ENCODE measurements at regions of chr15 and their contacts with region 1.

Region 1: GRCh38 chr15:70097337-70098169 is at the start of gene TLE3:
- DNase-seq: peak; percentile 100
- H3K4me3 ChIP-seq: peak within 1 kb of the TSS; percentile 79 to 85 (median 83)
- H3K27ac ChIP-seq: peak within 1 kb of the TSS; percentile 71 to 98 (median 94)
- H3K4me1 ChIP-seq: peaks cover 57% of the 10 kb centered on the region in 2 donors
- H3K27me3 ChIP-seq: no peaks in the 10 kb centered on the region
- CTCF ChIP-seq: peak in 3 of 6 experiments; percentile 31 to 39 (median 33)
- POLR2A ChIP-seq: peak; percentile 85 to 98
- total RNA-seq, gene TLE3: 39.1 to 275 (median 71.6) TPM

Region 2: DNA sequence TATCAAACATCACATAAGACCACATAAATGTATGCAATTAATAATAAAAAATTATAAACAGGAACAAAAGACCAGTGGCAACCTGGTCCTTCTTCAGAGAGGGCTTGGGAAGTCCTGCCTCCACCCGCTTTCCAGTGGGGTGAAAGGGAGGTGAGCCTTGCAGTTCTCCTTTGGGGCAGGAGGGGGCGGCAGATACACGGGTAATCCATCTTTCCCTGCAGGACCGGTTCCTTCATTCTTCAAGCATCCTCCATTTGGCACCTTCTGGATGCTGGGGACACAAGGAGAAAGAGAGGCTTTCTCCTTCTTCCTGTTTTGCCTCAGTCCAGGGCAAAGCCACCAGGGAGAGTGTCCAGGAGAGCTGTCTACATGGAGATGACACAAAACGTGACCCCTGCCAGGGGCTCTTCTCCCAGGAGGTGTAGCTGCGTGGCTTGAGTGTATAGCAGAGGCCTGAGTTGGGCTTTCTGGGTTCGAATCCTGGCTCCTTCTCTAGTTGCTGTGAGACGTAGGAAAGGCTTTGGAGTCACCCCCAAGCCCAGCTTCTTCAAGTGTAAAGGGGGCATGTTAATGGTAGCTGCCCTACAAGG is 621.7 kb before region 1 on chr15:
- intact Hi-C with region 1: loop called (anchors 10 kb)
- DNase-seq: peak; percentile 75 to 77
- H3K4me3 ChIP-seq: no peak overlapping the region
- H3K27ac ChIP-seq: no peak overlapping the region
- H3K4me1 ChIP-seq: no peaks in the 10 kb centered on the region
- H3K27me3 ChIP-seq: no peaks in the 10 kb centered on the region
- CTCF ChIP-seq: peak; percentile 46 to 92 (median 85)
- POLR2A ChIP-seq: no peak

Region 3: GRCh38 chr15:69593981-69594966 is 503.3 kb before region 1 on chr15:
- intact Hi-C with region 1: loop called (anchors 10 kb)
- DNase-seq: peak; percentile 91 to 93
- H3K4me3 ChIP-seq: no peak overlapping the region
- H3K27ac ChIP-seq: peak overlapping the region; percentile 83 to 90 (median 85)
- H3K4me1 ChIP-seq: peaks cover 34 to 35% of the 10 kb centered on the region in 2 donors
- H3K27me3 ChIP-seq: no peaks in the 10 kb centered on the region
- CTCF ChIP-seq: no peak
- POLR2A ChIP-seq: peak in 1 of 2 donors; percentile 15

Region 4: GRCh38 chr15:69729161-69729748 is 368.3 kb before region 1 on chr15:
- intact Hi-C with region 1: loop called (anchors 10 kb)
- DNase-seq: peak; percentile 35 to 54
- H3K4me3 ChIP-seq: no peak overlapping the region
- H3K27ac ChIP-seq: no peak overlapping the region
- H3K4me1 ChIP-seq: no peaks in the 10 kb centered on the region
- H3K27me3 ChIP-seq: no peaks in the 10 kb centered on the region
- CTCF ChIP-seq: peak; percentile 30 to 76 (median 64)
- POLR2A ChIP-seq: no peak

Region 5: GRCh38 chr15:70140543-70141375 is 43.2 kb after region 1 on chr15:
- intact Hi-C with region 1: no loop called
- DNase-seq: peak; percentile 83 to 85
- H3K4me3 ChIP-seq: peak overlapping the region in 1 of 3 donors; percentile 2
- H3K27ac ChIP-seq: peak overlapping the region in 2 of 3 donors; percentile 58 to 66
- H3K4me1 ChIP-seq: peaks cover 34 to 41% of the 10 kb centered on the region in 2 donors
- H3K27me3 ChIP-seq: no peaks in the 10 kb centered on the region
- CTCF ChIP-seq: no peak
- POLR2A ChIP-seq: no peak

Region 6: GRCh38 chr15:70210528-70210927 is 113.0 kb after region 1 on chr15:
- intact Hi-C with region 1: loop called (anchors 10 kb)
- DNase-seq: no peak
- H3K4me3 ChIP-seq: no peak overlapping the region
- H3K27ac ChIP-seq: no peak overlapping the region
- H3K4me1 ChIP-seq: peaks cover 37 to 40% of the 10 kb centered on the region in 2 donors
- H3K27me3 ChIP-seq: no peaks in the 10 kb centered on the region
- CTCF ChIP-seq: no peak
- POLR2A ChIP-seq: no peak

Measured in thyroid gland (tissue), 4 donors.